CD14-positive monocyte (primary cell): ENCODE measurements at regions of chr2 and their contacts with region 1.

Region 1: GRCh38 chr2:130797493-130798435 is 39.0 kb upstream of the ARHGEF4 start:
- DNase-seq: peak; percentile 66 to 74 (median 72)
- H3K4me3 ChIP-seq: peak overlapping the region; percentile 62 to 86 (median 67)
- H3K4me3 Mint-ChIP-seq: peak overlapping the region; percentile 74 to 85
- H3K27ac ChIP-seq: peak overlapping the region; percentile 11 to 74
- H3K27ac Mint-ChIP-seq: peak overlapping the region in 2 of 7 donors; percentile 8 to 31
- H3K4me1 ChIP-seq: peaks cover 7 to 18% of the 10 kb centered on the region in 2 donors
- H3K4me1 Mint-ChIP-seq: peaks cover 8% of the 10 kb centered on the region
- H3K27me3 ChIP-seq: peaks cover 3 to 23% of the 10 kb centered on the region in 2 donors
- H3K27me3 Mint-ChIP-seq: peaks cover 13 to 35% (median 22%) of the 10 kb centered on the region in 3 donors
- CTCF ChIP-seq: peak; percentile 79

Region 2: GRCh38 chr2:130720036-130720435 is 77.7 kb before region 1 on chr2:
- intact Hi-C with region 1: no loop called
- DNase-seq: no peak
- H3K4me3 ChIP-seq: no peak overlapping the region
- H3K4me3 Mint-ChIP-seq: no peak overlapping the region
- H3K27ac ChIP-seq: no peak overlapping the region
- H3K27ac Mint-ChIP-seq: no peak overlapping the region
- H3K4me1 ChIP-seq: no peaks in the 10 kb centered on the region
- H3K4me1 Mint-ChIP-seq: no peaks in the 10 kb centered on the region
- H3K27me3 ChIP-seq: no peaks in the 10 kb centered on the region
- H3K27me3 Mint-ChIP-seq: peaks cover 0 to 1% (median 1%) of the 10 kb centered on the region in 3 donors
- CTCF ChIP-seq: no peak

Region 3: DNA sequence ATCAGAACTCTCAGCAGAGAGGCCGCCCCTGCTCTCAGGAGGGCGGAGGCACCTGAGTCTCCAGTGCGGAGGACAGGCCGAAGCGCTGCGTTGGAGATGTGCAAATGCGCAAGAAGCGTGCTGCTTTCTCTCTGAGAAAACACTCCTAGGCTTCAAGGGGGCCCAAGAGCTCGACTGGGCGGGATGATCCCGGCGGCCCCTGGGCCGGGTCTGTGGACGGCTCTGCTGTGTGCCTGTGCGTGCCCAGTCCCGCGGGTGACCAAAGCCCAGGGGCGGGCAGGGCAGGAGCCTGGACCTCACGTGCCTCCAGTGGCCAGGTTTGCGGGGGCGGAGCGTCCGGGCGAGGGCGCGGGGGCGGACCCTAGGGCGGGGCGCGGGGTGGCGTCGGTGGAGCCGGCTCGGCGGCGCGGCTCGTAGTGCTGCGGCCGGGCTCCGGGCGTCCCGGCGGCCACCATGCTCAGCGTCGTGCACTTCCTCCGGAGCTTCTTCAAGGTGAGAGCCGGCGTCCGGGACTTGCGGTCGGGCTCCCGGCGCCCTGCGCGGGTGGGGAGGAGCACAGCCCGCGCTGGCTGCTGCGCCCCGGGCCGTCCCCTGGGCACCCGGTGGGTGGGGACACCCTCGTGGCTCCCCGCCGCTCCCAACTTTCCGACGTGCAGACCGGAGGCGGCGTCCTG is 38.9 kb after region 1 on chr2 and contains the start of gene ARHGEF4:
- intact Hi-C with region 1: no loop called
- DNase-seq: no peak
- H3K4me3 ChIP-seq: no peak within 1 kb of the TSS
- H3K4me3 Mint-ChIP-seq: peak within 1 kb of the TSS in 1 of 2 donors; percentile 80
- H3K27ac ChIP-seq: no peak within 1 kb of the TSS
- H3K27ac Mint-ChIP-seq: no peak within 1 kb of the TSS
- H3K4me1 ChIP-seq: no peaks in the 10 kb centered on the region
- H3K4me1 Mint-ChIP-seq: no peaks in the 10 kb centered on the region
- H3K27me3 ChIP-seq: peaks cover 14 to 33% of the 10 kb centered on the region in 2 donors
- H3K27me3 Mint-ChIP-seq: peaks cover 41 to 54% (median 44%) of the 10 kb centered on the region in 3 donors
- CTCF ChIP-seq: no peak
- polyA plus RNA-seq, gene ARHGEF4: 0.05 TPM in 1 of 3 donors, not detected in the others

Region 4: DNA sequence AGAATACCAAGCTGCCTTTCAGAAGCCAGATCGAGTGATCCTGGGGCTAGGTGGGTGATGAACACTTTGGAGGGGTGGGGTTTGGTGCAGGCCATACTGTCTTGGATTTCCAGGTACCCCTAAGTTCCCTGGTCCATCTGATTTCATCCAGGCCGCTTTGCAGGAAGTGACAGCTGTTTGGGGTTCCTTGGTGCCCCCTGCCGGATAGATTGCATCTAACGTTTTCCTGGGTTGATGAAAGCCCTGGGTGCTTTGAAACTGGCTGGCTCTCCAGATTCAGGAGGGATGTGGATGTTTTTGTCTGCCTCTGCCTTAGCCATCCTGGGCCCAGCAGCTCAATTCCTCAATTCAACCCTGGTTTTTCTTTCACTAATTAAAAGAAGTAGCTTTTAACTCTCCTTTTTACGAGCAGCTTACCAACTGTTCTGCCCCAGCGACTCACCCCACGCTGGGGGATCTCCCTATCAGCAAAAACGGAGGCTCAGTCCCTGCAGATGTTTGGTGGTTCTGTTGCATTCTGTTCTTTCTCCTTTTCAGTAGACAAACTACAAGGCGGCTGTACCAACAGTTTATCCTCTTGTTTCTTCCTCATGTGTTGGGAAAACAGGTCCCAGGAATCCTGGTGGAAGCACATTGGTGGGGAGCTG is 76.1 kb after region 1 on chr2:
- intact Hi-C with region 1: loop called (anchors 1 to 5 kb)
- DNase-seq: peak; percentile 26 to 39 (median 32)
- H3K4me3 ChIP-seq: no peak overlapping the region
- H3K4me3 Mint-ChIP-seq: no peak overlapping the region
- H3K27ac ChIP-seq: no peak overlapping the region
- H3K27ac Mint-ChIP-seq: no peak overlapping the region
- H3K4me1 ChIP-seq: no peaks in the 10 kb centered on the region
- H3K4me1 Mint-ChIP-seq: no peaks in the 10 kb centered on the region
- H3K27me3 ChIP-seq: no peaks in the 10 kb centered on the region
- H3K27me3 Mint-ChIP-seq: peaks cover 2 to 6% (median 5%) of the 10 kb centered on the region in 3 donors
- CTCF ChIP-seq: peak; percentile 68

Region 5: GRCh38 chr2:130917006-130917688 is 119.4 kb after region 1 on chr2:
- intact Hi-C with region 1: loop called in 1 of 2 experiments (anchors 5 kb)
- DNase-seq: no peak
- H3K4me3 ChIP-seq: no peak overlapping the region
- H3K4me3 Mint-ChIP-seq: no peak overlapping the region
- H3K27ac ChIP-seq: no peak overlapping the region
- H3K27ac Mint-ChIP-seq: peak overlapping the region in 1 of 7 donors; percentile 44
- H3K4me1 ChIP-seq: no peaks in the 10 kb centered on the region
- H3K4me1 Mint-ChIP-seq: no peaks in the 10 kb centered on the region
- H3K27me3 ChIP-seq: peaks cover 0 to 14% of the 10 kb centered on the region in 2 donors
- H3K27me3 Mint-ChIP-seq: peaks cover 17 to 46% (median 19%) of the 10 kb centered on the region in 3 donors
- CTCF ChIP-seq: no peak